IMR-90 (cell line): ENCODE measurements at regions of chr9 and their contacts with region 1.

Region 1: DNA sequence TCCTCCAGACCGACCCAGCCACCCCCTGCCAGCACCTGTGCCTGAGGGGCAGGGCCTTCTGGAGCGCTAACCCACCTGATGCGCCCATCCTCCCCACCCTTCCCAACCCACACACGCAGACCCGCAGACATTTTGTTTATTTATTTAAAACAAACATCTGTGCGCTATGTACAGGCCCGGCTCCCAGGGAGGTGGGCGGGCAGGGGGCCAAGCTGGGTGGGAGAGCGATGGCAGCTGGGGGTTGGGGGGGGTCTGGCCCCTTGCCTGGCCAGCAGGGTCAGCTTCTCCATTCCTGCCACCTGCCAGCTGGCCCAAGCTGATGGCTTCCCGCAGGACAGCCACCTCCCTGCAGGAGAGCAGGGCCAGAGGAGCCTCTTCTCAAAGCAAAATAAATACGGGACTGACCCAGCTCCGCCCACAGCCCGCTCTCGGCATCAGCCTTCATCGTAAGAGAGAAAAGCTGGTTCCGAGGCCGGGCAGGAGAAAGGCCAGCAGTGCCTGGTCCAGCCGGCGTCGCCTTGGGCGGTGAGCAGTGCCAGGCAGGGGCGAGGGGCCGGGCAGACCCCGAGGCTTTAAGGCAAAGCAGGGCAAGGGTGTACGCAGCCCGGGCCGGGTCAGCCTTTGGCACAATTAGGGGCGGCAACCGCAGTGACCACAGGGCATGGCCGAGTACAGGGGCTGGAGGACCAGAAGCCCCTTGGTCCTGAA is 10.9 kb upstream of the CLIC3 start:
- DNase-seq: peak; percentile 61
- ATAC-seq: peak; percentile 89
- H3K4me3 ChIP-seq: no peak overlapping the region
- H3K27ac ChIP-seq: no peak overlapping the region
- H3K4me1 ChIP-seq: peaks cover 11% of the 10 kb centered on the region
- H3K27me3 ChIP-seq: no peaks in the 10 kb centered on the region
- CTCF ChIP-seq: no peak
- POLR2A ChIP-seq: no peak
- RAD21 ChIP-seq: no peak

Region 2: DNA sequence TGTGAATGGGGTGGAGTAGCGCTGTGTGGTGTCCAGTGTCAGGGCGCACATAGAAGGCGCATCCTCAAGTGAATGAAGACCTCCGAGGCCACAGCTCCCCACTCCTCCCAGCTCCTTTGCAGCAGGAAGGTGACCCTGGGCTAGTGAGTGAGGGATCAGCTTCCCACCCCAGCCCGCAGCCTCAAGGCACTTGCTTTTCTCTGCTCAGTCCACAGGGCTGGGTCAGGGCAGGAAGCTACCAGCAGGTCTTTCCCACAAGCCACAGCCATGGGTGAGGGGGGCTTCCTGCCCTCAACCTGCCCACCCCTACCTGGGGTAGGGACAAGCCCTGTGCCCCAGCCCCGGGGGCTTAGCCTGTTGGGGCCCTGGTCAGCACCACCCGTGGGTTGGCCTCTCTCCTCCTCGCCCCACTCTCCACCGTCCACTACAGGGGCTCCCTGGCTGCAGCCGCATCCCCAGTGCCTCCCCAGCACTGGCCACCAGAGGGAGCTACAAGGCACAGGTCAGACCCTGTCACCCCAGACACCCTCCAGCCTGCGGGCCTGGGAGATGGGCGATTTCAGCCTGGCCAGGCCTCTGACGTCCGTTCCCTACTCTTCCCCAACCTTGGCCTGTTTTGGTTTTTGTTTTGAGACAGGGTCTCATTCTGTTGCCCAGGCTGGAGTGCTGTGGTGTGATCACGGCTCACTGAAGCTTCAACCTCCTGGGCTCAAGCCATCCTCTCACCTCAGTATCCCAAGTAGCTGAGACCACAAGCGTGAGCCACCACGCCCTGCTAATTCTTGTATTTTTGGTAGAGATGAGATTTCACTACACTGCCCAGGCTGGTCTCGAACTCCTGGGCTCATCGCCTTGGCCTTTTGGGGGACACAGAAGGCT is 22.0 kb after region 1 on chr9:
- CTCF ChIA-PET with region 1: interaction called, 3 read pairs
- POLR2A ChIA-PET with region 1: no interaction called
- dilution Hi-C with region 1: no loop called
- in situ Hi-C with region 1: no loop called
- intact Hi-C with region 1: loop called (anchors 2 kb)
- DNase-seq: peak; percentile 36
- ATAC-seq: peak; percentile 69
- H3K4me3 ChIP-seq: no peak overlapping the region; the same call in 1 of the 2 replicates
- H3K27ac ChIP-seq: no peak overlapping the region
- H3K4me1 ChIP-seq: peaks cover 5% of the 10 kb centered on the region
- H3K27me3 ChIP-seq: peaks cover 2% of the 10 kb centered on the region; the same call in 1 of the 2 replicates
- CTCF ChIP-seq: peak; percentile 74
- POLR2A ChIP-seq: no peak
- RAD21 ChIP-seq: peak; percentile 41; the same call in 1 of the 2 replicates

Region 3: GRCh38 chr9:137046098-137046787 is 39.0 kb after region 1 on chr9 and contains the start of gene NPDC1:
- CTCF ChIA-PET with region 1: no interaction called
- POLR2A ChIA-PET with region 1: no interaction called
- dilution Hi-C with region 1: no loop called
- in situ Hi-C with region 1: no loop called
- intact Hi-C with region 1: no loop called
- DNase-seq: peak; percentile 61
- ATAC-seq: peak; percentile 76
- H3K4me3 ChIP-seq: peak within 1 kb of the TSS; percentile 63
- H3K27ac ChIP-seq: no peak within 1 kb of the TSS; the same call in 1 of the 2 replicates
- H3K4me1 ChIP-seq: peaks cover 11% of the 10 kb centered on the region
- H3K27me3 ChIP-seq: peaks cover 32% of the 10 kb centered on the region
- CTCF ChIP-seq: peak; percentile 89
- POLR2A ChIP-seq: no peak
- RAD21 ChIP-seq: peak; percentile 74
- total RNA-seq, gene NPDC1: 2.7 and 2.8 TPM in 2 replicates